ENCODE measurements at regions of chr2 and their contacts with region 1.

Region 1: GRCh38 chr2:231161877-231162329 is 36.5 kb upstream of the ARMC9 start:
- DNase-seq: no peak
- ATAC-seq: peak; percentile 68
- H3K4me3 ChIP-seq: no peak overlapping the region
- H3K27ac ChIP-seq: no peak overlapping the region
- H3K4me1 ChIP-seq: peaks cover 4% of the 10 kb centered on the region in 2 donors
- H3K27me3 ChIP-seq: no peaks in the 10 kb centered on the region

Region 2: GRCh38 chr2:230847883-230848388 is 314.0 kb before region 1 on chr2:
- intact Hi-C with region 1: no loop called
- DNase-seq: peak; percentile 93 to 97
- ATAC-seq: peak; percentile 90
- H3K4me3 ChIP-seq: peak overlapping the region in 1 of 2 donors; percentile 4
- H3K27ac ChIP-seq: no peak overlapping the region
- H3K4me1 ChIP-seq: no peaks in the 10 kb centered on the region
- H3K27me3 ChIP-seq: no peaks in the 10 kb centered on the region

Region 3: GRCh38 chr2:231056453-231057424 is 105.2 kb before region 1 on chr2 and contains the start of gene PSMD1:
- intact Hi-C with region 1: no loop called
- DNase-seq: peak; percentile 95 to 97
- ATAC-seq: peak; percentile 97
- H3K4me3 ChIP-seq: peak within 1 kb of the TSS; percentile 74 to 97
- H3K27ac ChIP-seq: peak within 1 kb of the TSS in 1 of 2 donors; percentile 86
- H3K4me1 ChIP-seq: peaks cover 0 to 18% of the 10 kb centered on the region in 2 donors
- H3K27me3 ChIP-seq: no peaks in the 10 kb centered on the region
- total RNA-seq, gene PSMD1: 67.7 to 69.7 TPM

Region 4: DNA sequence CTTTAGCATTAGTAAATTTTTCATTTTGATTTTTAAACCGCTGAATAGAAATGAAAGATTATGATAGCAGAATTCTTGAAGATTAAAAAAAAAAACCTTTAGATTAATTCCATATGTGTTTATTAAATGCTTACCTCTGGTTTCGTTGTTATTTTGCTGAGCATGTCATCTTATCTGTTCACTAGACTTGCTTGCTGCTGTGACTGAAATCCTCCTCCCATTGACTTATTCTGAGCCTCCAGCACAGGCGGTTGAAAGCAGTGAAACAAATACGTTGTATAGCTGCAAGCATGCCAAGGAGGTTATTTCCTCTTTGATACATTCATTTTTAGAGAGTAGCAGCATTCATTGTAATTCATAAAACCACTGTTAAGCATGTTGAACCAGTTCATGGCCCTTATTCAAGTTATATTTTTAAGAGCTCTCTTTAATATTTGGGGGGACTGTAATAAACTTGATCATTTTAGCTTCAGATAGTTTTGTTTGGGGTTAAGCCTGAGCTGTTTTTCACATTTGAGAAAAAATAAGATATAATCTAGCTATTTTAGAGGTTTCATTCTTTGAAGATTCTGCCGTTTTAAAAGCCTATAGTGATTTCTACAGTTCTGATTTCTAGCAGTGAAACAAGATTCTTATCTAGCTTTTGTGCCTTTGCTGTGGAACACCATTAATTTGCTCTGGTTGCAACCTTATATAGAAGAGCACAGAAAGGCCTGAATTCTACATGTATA is 36.9 kb before region 1 on chr2 and contains the start of gene HTR2B:
- intact Hi-C with region 1: loop called in 1 of 2 experiments (anchors 5 kb)
- DNase-seq: no peak
- ATAC-seq: no peak
- H3K4me3 ChIP-seq: no peak within 1 kb of the TSS
- H3K27ac ChIP-seq: no peak within 1 kb of the TSS
- H3K4me1 ChIP-seq: no peaks in the 10 kb centered on the region
- H3K27me3 ChIP-seq: no peaks in the 10 kb centered on the region
- total RNA-seq, gene HTR2B: 2.0 to 5.1 TPM

Measured in aorta (tissue), 5 donors.